GM13976 (cell line): ENCODE measurements at regions of chr3 and their contacts with region 1.

Region 1: DNA sequence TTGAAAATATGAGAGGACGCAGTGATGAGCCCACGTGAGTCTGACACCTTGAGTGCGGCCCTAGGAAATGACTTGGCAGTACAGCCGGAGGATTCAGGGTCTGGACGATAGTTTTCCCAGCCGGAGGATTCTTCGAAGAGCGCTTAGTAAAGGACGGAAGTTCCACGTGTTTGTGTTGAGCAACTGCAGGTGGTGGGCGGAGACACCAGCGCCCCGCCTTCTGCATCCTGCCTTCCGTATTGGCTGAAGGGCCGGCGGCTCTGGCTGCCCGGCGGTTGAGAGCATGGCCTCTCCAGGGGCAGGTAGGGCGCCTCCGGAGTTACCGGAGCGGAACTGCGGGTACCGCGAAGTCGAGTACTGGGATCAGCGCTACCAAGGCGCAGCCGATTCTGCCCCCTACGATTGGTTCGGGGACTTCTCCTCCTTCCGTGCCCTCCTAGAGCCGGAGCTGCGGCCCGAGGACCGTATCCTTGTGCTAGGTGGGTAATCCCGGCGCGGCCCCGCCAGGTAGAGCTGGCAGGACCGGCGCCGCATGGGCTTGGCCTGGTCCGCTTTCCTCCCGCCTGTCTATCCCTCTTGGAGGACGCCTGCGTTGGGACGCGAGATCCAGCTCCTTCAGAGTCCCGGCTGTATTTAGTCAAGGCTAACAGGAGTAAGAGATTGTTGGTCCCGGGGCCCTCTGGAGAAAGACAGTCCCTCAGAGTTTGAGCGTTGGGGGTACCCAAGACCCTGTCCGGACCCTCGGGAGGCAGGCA is at the start of gene EEF1AKMT4:
- DNase-seq: peak; percentile 97
- CTCF ChIP-seq: peak; percentile 30

Region 2: GRCh38 chr3:182268711-182269110 is 1980.9 kb before region 1 on chr3:
- in situ Hi-C with region 1: no loop called
- DNase-seq: no peak
- CTCF ChIP-seq: no peak

Region 3: DNA sequence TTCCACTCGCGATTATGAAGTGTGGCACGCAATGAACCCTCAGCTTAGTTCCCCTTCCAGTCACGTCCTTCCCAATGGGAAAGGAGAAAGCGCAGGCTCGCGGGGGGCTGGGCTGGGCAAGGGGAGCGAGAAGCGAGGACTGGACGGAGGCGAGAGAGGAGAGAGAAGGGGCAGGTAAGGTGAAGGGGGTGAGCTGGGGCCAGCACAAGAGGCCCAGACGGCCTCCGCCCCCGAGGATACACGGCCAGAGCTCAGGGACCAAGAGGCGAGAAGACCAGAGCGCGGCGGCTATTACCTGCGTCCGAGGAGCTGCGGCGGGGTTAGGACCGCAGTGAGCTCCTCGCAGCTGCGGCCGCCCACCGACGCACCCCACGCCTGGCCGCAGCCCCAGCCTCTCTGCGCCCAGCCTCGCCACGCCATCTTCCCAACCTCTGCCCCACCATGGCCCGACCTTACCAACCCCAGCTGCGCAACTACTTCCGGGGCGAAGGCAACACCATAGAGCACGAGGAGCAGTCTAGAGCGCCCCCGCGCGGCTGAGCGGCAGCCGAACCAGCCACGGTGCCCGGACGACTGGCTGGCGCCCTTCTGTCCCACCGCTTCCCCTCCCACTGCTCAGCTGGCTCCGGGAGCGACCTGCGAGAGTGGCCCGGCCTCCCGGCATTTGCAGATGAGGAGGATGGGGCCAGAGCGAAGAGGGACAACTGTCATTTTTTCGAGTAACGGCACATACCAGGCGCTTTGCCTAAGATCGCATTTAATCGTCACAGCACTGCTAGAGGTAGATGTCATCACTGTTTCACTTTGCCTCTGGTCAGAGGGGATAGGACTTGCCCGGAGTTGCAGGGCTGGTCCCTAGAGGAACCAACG is 364.9 kb before region 1 on chr3 and contains the start of gene PARL:
- in situ Hi-C with region 1: loop called (anchors 25 kb)
- DNase-seq: peak; percentile 96
- CTCF ChIP-seq: peak; percentile 99